Natural killer cell (primary cell): ENCODE measurements at regions of chr9 and their contacts with region 1.

Region 1: DNA sequence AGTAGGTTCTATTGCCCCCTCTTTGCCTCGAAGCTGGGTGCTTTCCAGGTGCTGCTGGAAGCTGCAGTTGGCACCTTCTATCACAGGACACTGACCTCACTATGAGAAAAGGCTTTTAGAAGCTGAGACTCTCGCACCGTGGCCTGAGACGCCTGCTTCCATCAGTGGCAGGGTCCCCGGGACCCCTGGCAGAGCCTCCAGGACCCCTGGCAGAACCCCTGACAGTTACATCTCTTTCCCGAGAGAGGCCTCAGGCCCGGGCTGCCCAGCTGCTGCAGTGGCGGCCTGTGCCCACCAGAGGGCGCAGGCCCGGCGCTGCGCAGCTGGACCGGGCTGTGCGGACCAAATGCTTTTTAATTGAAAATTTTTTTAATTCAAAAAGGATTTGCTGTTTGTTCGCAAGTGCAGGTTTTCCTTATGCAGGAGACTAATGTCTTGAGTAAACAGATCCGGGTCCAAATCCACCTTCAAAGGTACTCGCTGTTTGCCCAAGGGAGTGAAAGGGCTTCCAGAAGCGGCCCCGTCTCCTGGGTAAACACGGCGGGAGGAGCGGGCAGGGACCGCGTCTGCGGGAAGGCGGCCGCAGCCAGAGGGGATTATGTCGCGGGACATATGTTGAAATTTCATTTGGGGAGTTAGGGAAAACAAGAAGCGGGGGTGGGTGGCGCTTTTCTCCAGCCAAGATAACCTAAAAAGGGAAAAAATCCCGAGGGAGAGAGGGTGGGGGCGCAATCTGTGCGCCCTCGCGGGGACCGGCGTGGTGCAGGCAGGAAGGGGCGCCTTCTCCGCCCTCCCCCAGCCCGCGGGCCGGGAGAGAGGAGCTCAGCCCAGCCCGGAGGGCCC is 114.4 kb upstream of the LMX1B start:
- DNase-seq: peak; percentile 55 to 75
- ATAC-seq: peak; percentile 84 to 89 (median 85)
- H3K4me3 ChIP-seq: peak overlapping the region; percentile 5
- H3K4me3 Mint-ChIP-seq: peak overlapping the region; percentile 60
- H3K27ac ChIP-seq: no peak overlapping the region
- H3K27ac Mint-ChIP-seq: no peak overlapping the region
- H3K4me1 ChIP-seq: peaks cover 20% of the 10 kb centered on the region
- H3K4me1 Mint-ChIP-seq: peaks cover 14 to 19% of the 10 kb centered on the region in 2 donors
- H3K27me3 ChIP-seq: peaks cover 10% of the 10 kb centered on the region
- H3K27me3 Mint-ChIP-seq: peaks cover 13% of the 10 kb centered on the region in 2 donors
- CTCF ChIP-seq: peak; percentile 99

Region 2: GRCh38 chr9:126027566-126027965 is 471.7 kb before region 1 on chr9:
- intact Hi-C with region 1: no loop called
- DNase-seq: no peak
- ATAC-seq: no peak
- H3K4me3 ChIP-seq: no peak overlapping the region
- H3K4me3 Mint-ChIP-seq: no peak overlapping the region
- H3K27ac ChIP-seq: no peak overlapping the region
- H3K27ac Mint-ChIP-seq: no peak overlapping the region
- H3K4me1 ChIP-seq: no peaks in the 10 kb centered on the region
- H3K4me1 Mint-ChIP-seq: no peaks in the 10 kb centered on the region
- H3K27me3 ChIP-seq: no peaks in the 10 kb centered on the region
- H3K27me3 Mint-ChIP-seq: no peaks in the 10 kb centered on the region
- CTCF ChIP-seq: no peak

Region 3: DNA sequence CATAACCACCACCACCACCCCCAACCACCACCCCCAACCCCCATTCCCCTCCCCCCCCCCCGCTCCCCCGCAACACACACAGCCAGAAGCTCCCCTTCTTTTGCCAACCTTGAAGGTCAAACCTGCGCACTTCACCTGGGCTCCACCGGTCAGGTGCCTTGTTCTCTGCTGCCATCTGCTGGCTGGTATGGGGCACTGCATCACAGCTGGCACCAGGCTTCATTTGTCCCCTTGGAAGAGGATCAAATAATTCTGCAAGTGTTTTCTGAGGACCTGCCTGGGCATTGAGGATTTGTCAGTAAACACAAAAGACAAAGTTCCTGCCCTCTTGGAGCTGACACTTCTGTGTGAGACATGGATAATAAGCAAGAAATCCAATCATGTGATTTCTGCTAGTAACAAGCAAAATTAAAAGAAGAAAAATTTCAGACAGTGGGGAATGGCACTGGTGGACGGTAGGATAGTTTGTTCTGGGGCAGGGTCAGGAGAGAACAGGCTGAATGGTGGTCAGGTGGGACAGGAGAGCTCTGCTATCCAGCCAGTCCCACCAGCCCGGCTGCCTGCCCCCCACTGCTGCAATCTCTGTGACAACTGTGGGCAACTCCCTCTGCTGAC is 58.9 kb after region 1 on chr9:
- intact Hi-C with region 1: loop called (anchors 1 kb)
- DNase-seq: peak; percentile 57 to 85
- ATAC-seq: peak; percentile 85 to 87 (median 86)
- H3K4me3 ChIP-seq: no peak overlapping the region
- H3K4me3 Mint-ChIP-seq: no peak overlapping the region
- H3K27ac ChIP-seq: no peak overlapping the region
- H3K27ac Mint-ChIP-seq: no peak overlapping the region
- H3K4me1 ChIP-seq: no peaks in the 10 kb centered on the region
- H3K4me1 Mint-ChIP-seq: peaks cover 0 to 5% of the 10 kb centered on the region in 2 donors
- H3K27me3 ChIP-seq: peaks cover 3% of the 10 kb centered on the region
- H3K27me3 Mint-ChIP-seq: peaks cover 16 to 42% of the 10 kb centered on the region in 2 donors
- CTCF ChIP-seq: peak; percentile 85